Mammary epithelial cell (primary cell): ENCODE measurements at regions of chr12 and their contacts with region 1.

Region 1: GRCh38 chr12:597926-598568 is 65.2 kb downstream of the NINJ2 start:
- DNase-seq: peak; percentile 90
- H3K4me3 ChIP-seq: no peak overlapping the region
- H3K27ac ChIP-seq: peak overlapping the region; percentile 63
- H3K4me1 ChIP-seq: peaks cover 19% of the 10 kb centered on the region
- H3K27me3 ChIP-seq: no peaks in the 10 kb centered on the region
- CTCF ChIP-seq: no peak

Region 2: DNA sequence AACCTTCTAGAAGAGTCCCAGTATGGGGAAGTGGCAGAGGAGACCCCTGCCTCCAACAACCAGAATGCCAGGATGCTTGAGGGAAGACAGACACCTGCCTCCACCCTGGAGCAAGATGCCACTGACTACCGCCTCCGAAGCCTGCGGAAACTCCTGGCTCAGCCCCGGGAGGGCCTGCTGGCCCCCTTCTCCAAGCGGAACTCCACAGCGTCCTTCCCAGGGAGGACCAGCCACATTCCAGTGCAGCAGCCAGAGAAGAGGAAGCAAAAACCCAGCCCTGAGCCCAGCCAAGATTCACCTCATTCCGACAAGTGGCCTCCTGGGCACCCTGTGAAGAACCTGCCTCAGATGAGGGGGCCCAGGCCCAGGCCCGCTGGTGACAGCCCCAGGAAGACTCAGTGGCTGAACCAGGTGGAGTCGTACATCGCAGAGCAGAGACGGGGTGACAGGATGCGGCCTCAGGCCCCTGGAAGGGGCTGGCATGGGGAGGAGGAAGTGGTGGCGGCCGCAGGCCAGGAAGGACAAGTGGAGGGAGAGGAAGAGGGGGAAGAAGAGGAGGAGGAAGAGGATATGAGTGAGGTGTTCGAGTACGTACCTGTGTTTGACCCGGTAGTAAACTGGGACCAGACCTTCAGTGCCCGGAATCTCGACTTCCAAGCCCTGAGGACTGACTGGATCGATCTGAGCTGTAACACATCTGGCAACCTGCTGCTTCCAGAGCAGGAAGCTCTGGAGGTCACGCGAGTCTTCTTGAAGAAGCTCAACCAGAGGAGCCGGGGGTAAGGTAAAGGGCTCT is 44.6 kb before region 1 on chr12:
- CTCF ChIA-PET with region 1: no interaction called
- dilution Hi-C with region 1: no loop called
- in situ Hi-C with region 1: no loop called
- intact Hi-C with region 1: no loop called
- DNase-seq: no peak
- H3K4me3 ChIP-seq: no peak overlapping the region
- H3K27ac ChIP-seq: no peak overlapping the region
- H3K4me1 ChIP-seq: no peaks in the 10 kb centered on the region
- H3K27me3 ChIP-seq: no peaks in the 10 kb centered on the region
- CTCF ChIP-seq: no peak

Region 3: DNA sequence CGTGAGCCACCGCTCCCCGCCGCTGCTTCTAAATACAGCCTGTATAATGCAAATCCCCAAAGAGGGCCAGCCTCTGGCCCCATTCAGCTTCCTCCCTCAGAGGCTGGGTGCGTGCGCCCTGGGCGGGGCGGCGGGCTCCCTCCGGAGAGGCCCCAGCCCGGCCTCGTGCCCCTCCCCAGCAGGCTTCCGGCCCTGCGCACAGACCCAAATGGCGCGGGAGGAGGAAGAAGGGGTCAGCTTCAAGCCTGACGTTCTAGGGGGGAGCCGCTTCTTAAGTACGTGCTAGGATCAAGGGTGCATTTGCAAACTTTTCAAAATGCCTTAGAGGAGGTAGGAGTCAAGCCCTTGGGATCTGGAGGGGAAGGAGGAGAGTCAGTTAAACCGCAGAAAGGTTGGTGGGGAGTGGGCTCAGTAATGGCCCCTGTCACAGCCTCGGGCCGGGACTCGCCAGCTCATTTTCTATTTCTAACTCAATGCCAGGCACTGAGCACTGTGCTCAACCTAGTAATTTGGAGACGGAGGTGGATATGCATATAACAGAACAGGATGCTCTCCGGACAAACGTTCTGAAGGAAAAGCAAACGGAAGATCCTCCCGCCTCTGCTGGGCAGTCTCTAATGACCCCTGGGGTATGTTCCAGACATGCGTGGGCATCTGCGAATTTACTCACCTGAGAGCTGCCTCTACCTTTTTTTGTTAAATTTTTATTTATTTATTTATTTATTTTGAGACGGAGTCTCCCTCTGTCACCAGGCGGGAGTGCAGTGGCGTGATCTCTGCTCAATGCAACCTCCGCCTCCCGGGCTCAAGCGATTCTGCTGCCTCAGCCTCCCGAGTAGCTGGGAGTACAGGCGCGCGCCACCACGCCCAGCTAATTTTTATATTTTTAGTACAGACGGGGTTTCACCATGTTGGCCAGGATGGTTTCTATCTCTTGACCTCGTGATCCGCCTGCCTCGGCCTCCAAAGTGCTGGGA is 32.9 kb after region 1 on chr12:
- CTCF ChIA-PET with region 1: no interaction called
- dilution Hi-C with region 1: no loop called
- in situ Hi-C with region 1: no loop called
- intact Hi-C with region 1: loop called (anchors 5 kb)
- DNase-seq: no peak
- H3K4me3 ChIP-seq: no peak overlapping the region
- H3K27ac ChIP-seq: no peak overlapping the region
- H3K4me1 ChIP-seq: peaks cover 18% of the 10 kb centered on the region
- H3K27me3 ChIP-seq: no peaks in the 10 kb centered on the region
- CTCF ChIP-seq: no peak

Region 4: GRCh38 chr12:857611-858010 is 259.6 kb after region 1 on chr12:
- CTCF ChIA-PET with region 1: interaction called, 11 read pairs
- dilution Hi-C with region 1: no loop called
- in situ Hi-C with region 1: no loop called
- intact Hi-C with region 1: no loop called
- DNase-seq: peak; percentile 83
- H3K4me3 ChIP-seq: no peak overlapping the region
- H3K27ac ChIP-seq: peak overlapping the region; percentile 83
- H3K4me1 ChIP-seq: peaks cover 23% of the 10 kb centered on the region
- H3K27me3 ChIP-seq: no peaks in the 10 kb centered on the region
- CTCF ChIP-seq: no peak